B cell (primary cell): ENCODE measurements at regions of chr7 and their contacts with region 1.

Region 1: DNA sequence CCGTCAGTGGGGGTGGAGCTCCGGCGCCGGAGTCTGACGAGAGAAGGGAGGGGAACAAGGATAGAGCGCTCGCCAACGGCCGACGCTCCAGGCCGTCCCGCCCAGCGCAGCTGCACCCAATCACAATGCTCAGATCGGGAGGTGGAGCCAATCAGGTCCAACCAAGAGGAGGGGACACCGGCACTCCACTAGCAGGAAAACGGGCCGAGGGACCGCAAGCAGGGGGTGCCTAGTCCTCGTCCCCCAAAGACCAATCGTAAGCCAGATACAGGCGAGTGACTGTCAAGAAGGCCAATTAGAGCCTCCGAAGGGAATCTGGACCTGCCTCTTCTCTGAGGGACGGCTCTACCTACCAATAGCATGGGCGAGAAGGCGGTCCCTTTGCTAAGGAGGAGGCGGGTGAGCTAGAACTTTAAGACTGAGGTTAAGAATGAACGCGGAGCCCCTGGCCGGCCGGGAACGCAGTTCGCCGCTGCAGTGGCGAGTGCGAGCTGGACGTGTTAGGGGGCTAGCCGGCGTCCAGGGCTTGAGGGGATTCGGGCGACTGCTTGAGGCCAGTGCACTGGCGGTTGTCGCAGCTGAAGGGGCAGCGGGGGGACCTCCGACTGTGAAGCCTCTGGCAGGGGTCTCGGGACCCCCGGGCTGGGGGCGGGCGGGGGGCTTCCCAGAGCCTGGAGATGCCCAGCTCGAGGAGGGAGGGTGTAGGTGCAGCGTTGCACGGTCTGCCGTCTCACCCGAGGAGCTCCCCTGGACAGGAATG is at the start of gene FBXO24:
- DNase-seq: peak; percentile 100
- ATAC-seq: peak; percentile 79
- H3K4me3 ChIP-seq: peak within 1 kb of the TSS; percentile 82 to 93 (median 85)
- H3K4me3 Mint-ChIP-seq: peak within 1 kb of the TSS; percentile 98
- H3K27ac ChIP-seq: peak within 1 kb of the TSS; percentile 94 to 97
- H3K27ac Mint-ChIP-seq: peak within 1 kb of the TSS; percentile 99
- H3K4me1 ChIP-seq: peaks cover 27 to 38% of the 10 kb centered on the region in 2 donors
- H3K4me1 Mint-ChIP-seq: peaks cover 44% of the 10 kb centered on the region
- H3K27me3 ChIP-seq: peaks cover 0 to 14% (median 5%) of the 10 kb centered on the region in 4 experiments
- H3K27me3 Mint-ChIP-seq: peaks cover 9% of the 10 kb centered on the region
- CTCF ChIP-seq: no peak
- total RNA-seq, gene FBXO24: 1.6 and 2.2 TPM in 2 replicates

Region 2: GRCh38 chr7:100478966-100479665 is 107.3 kb before region 1 on chr7 and contains the start of gene TSC22D4:
- CTCF ChIA-PET with region 1: interaction called, 12 read pairs
- POLR2A ChIA-PET with region 1: interaction called, 13 read pairs
- intact Hi-C with region 1: loop called (anchors 1 kb)
- DNase-seq: peak; percentile 92
- ATAC-seq: peak; percentile 70
- H3K4me3 ChIP-seq: peak within 1 kb of the TSS; percentile 90 to 99 (median 96)
- H3K4me3 Mint-ChIP-seq: peak within 1 kb of the TSS; percentile 97
- H3K27ac ChIP-seq: peak within 1 kb of the TSS; percentile 72 to 89
- H3K27ac Mint-ChIP-seq: peak within 1 kb of the TSS; percentile 91
- H3K4me1 ChIP-seq: peaks cover 34 to 51% of the 10 kb centered on the region in 2 donors
- H3K4me1 Mint-ChIP-seq: peaks cover 37% of the 10 kb centered on the region
- H3K27me3 ChIP-seq: no peaks in the 10 kb centered on the region
- H3K27me3 Mint-ChIP-seq: no peaks in the 10 kb centered on the region
- CTCF ChIP-seq: no peak
- total RNA-seq, gene TSC22D4: 92.8 and 95.0 TPM in 2 replicates

Region 3: GRCh38 chr7:100563809-100564400 is 22.5 kb before region 1 on chr7:
- CTCF ChIA-PET with region 1: interaction called, 226 read pairs
- POLR2A ChIA-PET with region 1: interaction called, 10 read pairs
- intact Hi-C with region 1: loop called (anchors 1 kb)
- DNase-seq: peak; percentile 85
- ATAC-seq: peak; percentile 77
- H3K4me3 ChIP-seq: no peak overlapping the region
- H3K4me3 Mint-ChIP-seq: no peak overlapping the region
- H3K27ac ChIP-seq: no peak overlapping the region
- H3K27ac Mint-ChIP-seq: no peak overlapping the region
- H3K4me1 ChIP-seq: peaks cover 20 to 29% of the 10 kb centered on the region in 2 donors
- H3K4me1 Mint-ChIP-seq: peaks cover 26% of the 10 kb centered on the region
- H3K27me3 ChIP-seq: no peaks in the 10 kb centered on the region
- H3K27me3 Mint-ChIP-seq: no peaks in the 10 kb centered on the region
- CTCF ChIP-seq: peak; percentile 94

Region 4: GRCh38 chr7:100604028-100604975 is 17.9 kb after region 1 on chr7:
- CTCF ChIA-PET with region 1: interaction called, 11 read pairs
- POLR2A ChIA-PET with region 1: interaction called, 18 read pairs
- intact Hi-C with region 1: loop called (anchors 1 kb)
- DNase-seq: peak; percentile 85
- ATAC-seq: peak; percentile 75
- H3K4me3 ChIP-seq: peak overlapping the region; percentile 36 to 85 (median 75)
- H3K4me3 Mint-ChIP-seq: peak overlapping the region; percentile 90
- H3K27ac ChIP-seq: peak overlapping the region; percentile 43 to 54
- H3K27ac Mint-ChIP-seq: peak overlapping the region; percentile 80
- H3K4me1 ChIP-seq: peaks cover 15 to 25% of the 10 kb centered on the region in 2 donors
- H3K4me1 Mint-ChIP-seq: peaks cover 12% of the 10 kb centered on the region
- H3K27me3 ChIP-seq: no peaks in the 10 kb centered on the region
- H3K27me3 Mint-ChIP-seq: no peaks in the 10 kb centered on the region
- CTCF ChIP-seq: peak; percentile 68

Region 5: DNA sequence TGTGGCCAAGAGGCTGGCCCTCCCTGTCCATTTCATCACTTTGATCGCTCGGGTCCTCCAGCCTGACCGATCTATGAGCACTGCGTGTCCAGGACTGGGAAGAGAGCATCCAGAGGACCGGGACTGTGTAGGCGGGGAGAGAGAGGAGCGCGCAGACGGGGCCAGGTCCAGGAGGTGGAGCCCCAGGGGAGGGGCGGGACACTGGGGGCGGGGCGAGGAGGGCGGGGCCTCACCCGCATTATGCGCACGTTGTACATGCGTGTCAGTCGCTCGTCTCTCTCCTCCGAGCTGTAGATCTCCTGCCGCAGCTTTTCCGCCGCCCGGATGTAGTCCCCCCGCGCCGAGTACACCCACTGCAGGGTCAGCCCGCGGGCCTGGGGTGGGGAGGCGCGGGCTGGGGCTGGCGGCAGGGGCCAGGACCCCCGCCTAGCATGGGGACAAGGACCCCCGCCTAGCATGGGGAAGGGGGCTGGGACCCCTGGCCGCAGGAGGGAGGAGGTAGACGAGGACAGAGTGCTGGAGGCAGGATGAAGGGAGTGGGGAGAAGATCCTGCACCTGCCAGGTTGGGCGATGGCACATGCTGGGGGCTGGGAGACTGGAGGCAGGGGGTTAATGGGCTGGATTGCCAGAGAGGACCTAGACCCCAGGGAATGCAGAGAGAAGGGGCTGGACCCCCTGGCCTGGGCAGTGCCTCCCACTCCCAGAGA is 40.2 kb after region 1 on chr7:
- CTCF ChIA-PET with region 1: no interaction called
- POLR2A ChIA-PET with region 1: interaction called, 14 read pairs
- intact Hi-C with region 1: loop called (anchors 1 kb)
- DNase-seq: peak; percentile 83
- ATAC-seq: peak; percentile 99
- H3K4me3 ChIP-seq: peak overlapping the region in 4 of 5 experiments; percentile 21 to 53 (median 44)
- H3K4me3 Mint-ChIP-seq: peak overlapping the region; percentile 80
- H3K27ac ChIP-seq: peak overlapping the region in 1 of 2 donors; percentile 55
- H3K27ac Mint-ChIP-seq: no peak overlapping the region
- H3K4me1 ChIP-seq: peaks cover 12 to 13% of the 10 kb centered on the region in 2 donors
- H3K4me1 Mint-ChIP-seq: peaks cover 11% of the 10 kb centered on the region
- H3K27me3 ChIP-seq: no peaks in the 10 kb centered on the region
- H3K27me3 Mint-ChIP-seq: no peaks in the 10 kb centered on the region
- CTCF ChIP-seq: no peak

Region 6: DNA sequence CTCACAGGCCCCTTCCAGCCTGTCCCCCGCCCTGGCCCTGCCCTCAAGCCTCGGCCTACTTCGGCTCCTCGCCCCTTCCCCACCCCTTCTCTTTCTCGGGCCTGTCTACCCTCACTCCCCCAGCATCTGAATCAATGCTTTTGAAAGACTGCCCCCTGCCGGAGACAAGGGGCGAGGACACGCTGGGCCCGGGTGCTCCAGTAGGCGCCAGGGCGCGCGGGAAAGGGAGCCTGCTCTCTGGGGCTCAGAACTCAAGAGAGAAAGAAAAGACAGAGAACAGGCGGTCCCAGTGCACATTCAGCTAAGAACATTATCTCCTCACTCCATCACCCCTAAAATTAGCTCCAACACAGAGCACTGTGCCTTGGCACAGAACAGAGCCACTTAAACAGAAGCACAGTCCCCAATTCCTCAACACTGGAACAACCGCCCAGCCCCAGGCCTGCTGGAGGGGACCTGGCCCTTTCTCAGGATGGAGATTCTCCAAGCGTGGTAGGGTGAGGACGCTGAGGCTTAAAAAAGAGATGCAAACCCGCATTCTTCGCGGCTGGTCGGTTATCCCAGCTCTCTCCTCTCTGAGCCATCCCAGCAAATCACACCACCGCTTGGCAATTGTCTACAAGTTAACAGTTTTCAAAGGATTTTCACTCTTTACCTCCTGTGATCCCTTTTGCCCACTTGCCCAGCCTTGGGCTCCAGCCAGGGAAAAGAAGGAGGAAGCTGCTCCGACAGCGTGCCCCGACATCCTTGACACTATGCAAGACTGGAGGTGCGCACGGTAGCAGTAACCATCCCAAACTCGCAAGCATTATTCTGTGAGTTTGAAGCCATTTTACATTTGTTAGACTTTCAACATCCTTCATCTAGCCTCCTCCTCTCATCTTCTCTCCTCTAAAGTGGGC is 105.5 kb after region 1 on chr7:
- CTCF ChIA-PET with region 1: interaction called, 13 read pairs
- POLR2A ChIA-PET with region 1: interaction called, 3 read pairs
- intact Hi-C with region 1: no loop called
- DNase-seq: peak; percentile 86
- ATAC-seq: peak; percentile 60
- H3K4me3 ChIP-seq: peak overlapping the region in 2 of 5 experiments; percentile 58 to 79
- H3K4me3 Mint-ChIP-seq: peak overlapping the region; percentile 89
- H3K27ac ChIP-seq: no peak overlapping the region
- H3K27ac Mint-ChIP-seq: peak overlapping the region; percentile 92
- H3K4me1 ChIP-seq: peaks cover 52 to 55% of the 10 kb centered on the region in 2 donors
- H3K4me1 Mint-ChIP-seq: peaks cover 51% of the 10 kb centered on the region
- H3K27me3 ChIP-seq: no peaks in the 10 kb centered on the region
- H3K27me3 Mint-ChIP-seq: no peaks in the 10 kb centered on the region
- CTCF ChIP-seq: peak; percentile 88

Region 7: GRCh38 chr7:101108330-101108857 is 521.9 kb after region 1 on chr7:
- CTCF ChIA-PET with region 1: no interaction called
- POLR2A ChIA-PET with region 1: no interaction called
- intact Hi-C with region 1: no loop called
- DNase-seq: no peak
- ATAC-seq: no peak
- H3K4me3 ChIP-seq: no peak overlapping the region
- H3K4me3 Mint-ChIP-seq: no peak overlapping the region
- H3K27ac ChIP-seq: no peak overlapping the region
- H3K27ac Mint-ChIP-seq: no peak overlapping the region
- H3K4me1 ChIP-seq: no peaks in the 10 kb centered on the region
- H3K4me1 Mint-ChIP-seq: no peaks in the 10 kb centered on the region
- H3K27me3 ChIP-seq: peaks cover 0 to 10% (median under 1%) of the 10 kb centered on the region in 4 experiments
- H3K27me3 Mint-ChIP-seq: peaks cover 26% of the 10 kb centered on the region
- CTCF ChIP-seq: no peak

Region 8: DNA sequence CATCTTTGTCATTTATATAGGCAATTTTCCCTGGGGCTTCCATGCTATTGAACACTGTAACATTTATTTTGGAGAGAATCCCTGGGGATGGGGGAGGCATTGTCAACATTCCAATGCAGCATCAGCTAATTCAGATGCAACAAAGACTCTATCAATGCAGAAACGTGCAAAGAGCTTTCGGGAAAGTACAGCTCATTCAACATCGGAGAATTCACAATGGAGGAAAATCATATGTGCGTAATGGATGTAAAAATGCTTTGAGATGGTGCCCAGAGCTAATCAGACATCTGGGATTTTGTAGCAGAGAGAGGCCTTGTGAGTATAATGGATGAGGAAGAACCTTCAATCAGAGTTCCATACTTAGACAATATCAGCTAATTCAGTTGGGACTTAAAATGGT is 686.8 kb after region 1 on chr7:
- CTCF ChIA-PET with region 1: no interaction called
- POLR2A ChIA-PET with region 1: no interaction called
- intact Hi-C with region 1: no loop called
- DNase-seq: no peak
- ATAC-seq: no peak
- H3K4me3 ChIP-seq: no peak overlapping the region
- H3K4me3 Mint-ChIP-seq: no peak overlapping the region
- H3K27ac ChIP-seq: no peak overlapping the region
- H3K27ac Mint-ChIP-seq: no peak overlapping the region
- H3K4me1 ChIP-seq: no peaks in the 10 kb centered on the region
- H3K4me1 Mint-ChIP-seq: no peaks in the 10 kb centered on the region
- H3K27me3 ChIP-seq: no peaks in the 10 kb centered on the region
- H3K27me3 Mint-ChIP-seq: peaks cover 23% of the 10 kb centered on the region
- CTCF ChIP-seq: no peak